ENCODE measurements at regions of chr14 and their contacts with region 1.

Region 1: GRCh38 chr14:24514209-24514608 is 6.1 kb upstream of the CMA1 start:
- DNase-seq: no peak
- H3K4me3 ChIP-seq: no peak overlapping the region
- H3K27ac ChIP-seq: no peak overlapping the region
- H3K4me1 ChIP-seq: no peaks in the 10 kb centered on the region
- H3K27me3 ChIP-seq: no peaks in the 10 kb centered on the region
- CTCF ChIP-seq: no peak
- POLR2A ChIP-seq: no peak

Region 2: DNA sequence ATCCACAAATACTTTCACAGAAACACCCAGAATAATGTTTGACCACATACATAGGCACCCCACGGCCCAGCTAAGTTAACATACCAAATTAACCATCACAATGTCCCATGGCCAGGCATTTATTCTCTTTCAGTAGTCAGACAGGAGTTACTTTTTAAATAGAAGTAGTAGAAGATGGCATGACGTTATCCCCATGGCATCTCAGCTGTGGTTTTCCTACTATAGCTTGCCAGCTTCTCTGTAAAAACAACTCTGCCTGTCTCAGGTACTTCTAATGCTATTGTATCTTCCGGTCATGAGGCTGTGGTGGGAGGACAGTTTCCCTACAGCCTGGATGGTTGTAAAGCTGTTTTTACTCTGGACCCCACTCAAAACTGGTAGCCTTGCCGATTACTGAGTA is 42.5 kb after region 1 on chr14:
- intact Hi-C with region 1: no loop called
- DNase-seq: peak in 1 of 2 donors; percentile 64
- H3K4me3 ChIP-seq: no peak overlapping the region
- H3K27ac ChIP-seq: peak overlapping the region; percentile 57 to 79
- H3K4me1 ChIP-seq: no peaks in the 10 kb centered on the region
- H3K27me3 ChIP-seq: no peaks in the 10 kb centered on the region
- CTCF ChIP-seq: no peak
- POLR2A ChIP-seq: no peak

Region 3: DNA sequence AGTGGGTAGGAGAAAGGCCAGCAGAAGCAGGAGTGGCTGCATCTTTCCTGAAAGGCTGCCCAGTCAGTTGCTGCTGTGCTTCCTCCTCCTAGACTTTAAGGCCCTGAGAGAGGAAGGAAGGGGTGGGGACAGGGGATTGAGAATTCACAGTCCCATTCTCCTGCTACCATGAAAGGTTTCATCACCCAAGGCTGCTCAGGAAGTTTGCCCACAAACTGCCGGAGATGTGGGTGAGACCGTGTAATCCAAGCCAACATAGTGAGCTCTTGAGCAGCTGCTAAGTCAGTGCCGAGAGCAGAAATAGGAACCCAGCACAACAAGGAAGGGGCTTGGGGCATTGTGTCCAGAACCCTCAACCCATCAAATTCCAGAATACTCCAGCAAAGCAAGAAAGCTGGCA is 62.0 kb after region 1 on chr14 and contains the start of gene CTSG:
- intact Hi-C with region 1: loop called (anchors 2 kb)
- DNase-seq: no peak
- H3K4me3 ChIP-seq: no peak within 1 kb of the TSS
- H3K27ac ChIP-seq: no peak within 1 kb of the TSS
- H3K4me1 ChIP-seq: no peaks in the 10 kb centered on the region
- H3K27me3 ChIP-seq: peaks cover 0 to 4% of the 10 kb centered on the region in 2 donors
- CTCF ChIP-seq: no peak
- POLR2A ChIP-seq: no peak
- total RNA-seq, gene CTSG: 0.59 to 25.3 (median 0.98) TPM

Measured in breast epithelium (tissue), 4 donors.